ENCODE measurements at regions of chr2 and their contacts with region 1.

Region 1: GRCh38 chr2:222057347-222058073 is 241.3 kb downstream of the PAX3 start:
- DNase-seq: no peak
- ATAC-seq: peak; percentile 68
- H3K4me3 ChIP-seq: no peak overlapping the region
- H3K27ac ChIP-seq: no peak overlapping the region
- H3K4me1 ChIP-seq: no peaks in the 10 kb centered on the region
- H3K27me3 ChIP-seq: peaks cover 0 to 4% of the 10 kb centered on the region in 2 experiments; a peak in 2 of 4 replicates
- CTCF ChIP-seq: peak; percentile 45 to 53 (median 47)
- EP300 ChIP-seq: no peak
- POLR2A ChIP-seq: no peak
- RAD21 ChIP-seq: peak; percentile 63

Region 2: GRCh38 chr2:222311978-222312738 is 254.6 kb after region 1 on chr2:
- CTCF ChIA-PET with region 1: no interaction called
- POLR2A ChIA-PET with region 1: no interaction called
- RAD21 ChIA-PET with region 1: interaction called, 4 read pairs
- SMC1A ChIA-PET with region 1: no interaction called
- in situ Hi-C with region 1: no loop called
- intact Hi-C with region 1: loop called (anchors 5 kb)
- DNase-seq: no peak
- ATAC-seq: peak; percentile 30; the same call in 2 of the 3 replicates
- H3K4me3 ChIP-seq: no peak overlapping the region
- H3K27ac ChIP-seq: no peak overlapping the region
- H3K4me1 ChIP-seq: no peaks in the 10 kb centered on the region
- H3K27me3 ChIP-seq: peaks cover 17 to 40% of the 10 kb centered on the region in 2 experiments
- CTCF ChIP-seq: no peak
- EP300 ChIP-seq: no peak
- POLR2A ChIP-seq: no peak
- RAD21 ChIP-seq: no peak

Region 3: GRCh38 chr2:222613715-222614331 is 556.3 kb after region 1 on chr2:
- CTCF ChIA-PET with region 1: interaction called, 5 read pairs
- POLR2A ChIA-PET with region 1: no interaction called
- RAD21 ChIA-PET with region 1: no interaction called
- SMC1A ChIA-PET with region 1: no interaction called
- in situ Hi-C with region 1: no loop called
- intact Hi-C with region 1: loop called (anchors 1 kb)
- DNase-seq: no peak
- ATAC-seq: peak; percentile 93
- H3K4me3 ChIP-seq: no peak overlapping the region
- H3K27ac ChIP-seq: no peak overlapping the region
- H3K4me1 ChIP-seq: no peaks in the 10 kb centered on the region
- H3K27me3 ChIP-seq: no peaks in the 10 kb centered on the region
- CTCF ChIP-seq: peak; percentile 73 to 82 (median 79)
- EP300 ChIP-seq: no peak
- POLR2A ChIP-seq: no peak
- RAD21 ChIP-seq: peak; percentile 71

Region 4: GRCh38 chr2:222690564-222691200 is 633.2 kb after region 1 on chr2:
- CTCF ChIA-PET with region 1: no interaction called
- POLR2A ChIA-PET with region 1: no interaction called
- RAD21 ChIA-PET with region 1: no interaction called
- SMC1A ChIA-PET with region 1: no interaction called
- in situ Hi-C with region 1: no loop called
- intact Hi-C with region 1: loop called (anchors 10 kb)
- DNase-seq: no peak
- ATAC-seq: peak; percentile 99
- H3K4me3 ChIP-seq: no peak overlapping the region
- H3K27ac ChIP-seq: no peak overlapping the region
- H3K4me1 ChIP-seq: no peaks in the 10 kb centered on the region
- H3K27me3 ChIP-seq: no peaks in the 10 kb centered on the region
- CTCF ChIP-seq: peak; percentile 99 to 100 (median 100); a peak in 5 of 6 replicates
- EP300 ChIP-seq: no peak
- POLR2A ChIP-seq: no peak
- RAD21 ChIP-seq: peak; percentile 93

Measured in GM12878 (cell line).